K562 (cell line): ENCODE measurements at regions of chr15 and their contacts with region 1.

Region 1: GRCh38 chr15:67070892-67071664 is 5.7 kb downstream of the SMAD3 start:
- DNase-seq: no peak
- ATAC-seq: no peak
- H3K4me3 ChIP-seq: no peak overlapping the region
- H3K27ac ChIP-seq: no peak overlapping the region
- H3K4me1 ChIP-seq: peaks cover 21 to 68% of the 10 kb centered on the region in 2 experiments
- H3K27me3 ChIP-seq: no peaks in the 10 kb centered on the region
- CTCF ChIP-seq: no peak
- EP300 ChIP-seq: no peak
- POLR2A ChIP-seq: no peak
- RAD21 ChIP-seq: no peak

Region 2: DNA sequence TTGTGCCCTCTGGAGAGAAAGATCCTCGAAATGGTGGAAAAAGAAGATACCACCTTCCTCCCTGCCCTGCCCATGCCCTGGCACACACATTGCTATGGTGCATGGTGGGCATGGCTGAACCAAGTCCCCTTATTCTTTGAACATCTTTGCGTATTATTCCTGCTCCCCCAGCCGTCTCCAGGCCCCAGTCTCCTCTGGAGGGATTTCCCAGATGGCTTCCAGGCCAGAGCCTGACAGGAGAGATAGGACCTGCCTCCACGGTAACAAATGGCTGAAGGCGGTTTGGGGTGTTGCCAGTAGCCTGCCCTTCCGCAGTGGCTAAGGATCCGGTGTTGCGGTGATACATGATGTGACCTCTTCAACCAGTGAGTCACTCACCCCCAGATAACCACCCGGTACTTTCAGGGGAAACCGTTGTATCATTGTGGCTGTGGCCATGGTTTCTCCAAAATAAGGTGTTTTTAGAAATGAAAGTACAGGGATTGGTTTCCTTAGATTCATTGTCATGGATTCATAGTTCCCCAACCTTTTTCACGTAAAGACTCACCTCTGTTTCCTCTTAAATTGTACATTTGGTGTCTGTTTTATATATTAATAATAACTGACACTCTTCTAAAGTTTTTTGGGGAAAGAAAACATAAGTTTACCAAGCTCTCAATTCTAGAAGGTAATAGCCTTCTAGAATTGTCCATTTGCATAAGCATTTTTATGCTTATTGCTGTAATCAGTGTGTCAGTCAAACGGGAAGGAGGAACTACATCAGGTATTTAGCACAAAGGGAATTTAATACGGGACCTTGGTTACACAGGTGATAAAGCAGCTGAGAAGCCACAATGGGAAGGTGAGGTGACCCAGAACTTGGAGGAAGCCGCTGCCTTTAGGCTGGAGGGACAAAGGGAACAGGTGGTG is 20.2 kb after region 1 on chr15:
- CTCF ChIA-PET with region 1: no interaction called
- POLR2A ChIA-PET with region 1: interaction called, 12 read pairs
- in situ Hi-C with region 1: no loop called
- intact Hi-C with region 1: loop called (anchors 2 kb)
- DNase-seq: peak; percentile 85 to 98 (median 90)
- ATAC-seq: peak; percentile 89
- H3K4me3 ChIP-seq: peak overlapping the region; percentile 12; the same call in 1 of the 2 replicates
- H3K27ac ChIP-seq: peak overlapping the region; percentile 97
- H3K4me1 ChIP-seq: peaks cover 70 to 72% of the 10 kb centered on the region in 2 experiments
- H3K27me3 ChIP-seq: no peaks in the 10 kb centered on the region
- CTCF ChIP-seq: no peak
- EP300 ChIP-seq: peak; percentile 100
- POLR2A ChIP-seq: peak; percentile 46; the same call in 1 of the 2 replicates
- RAD21 ChIP-seq: peak in 1 of 2 experiments; percentile 37; a peak in 2 of 4 replicates